ENCODE measurements at regions of chr5 and their contacts with region 1.

Region 1: GRCh38 chr5:148107608-148108007 is 43.8 kb downstream of the SPINK5 start:
- DNase-seq: peak in 1 of 2 experiments; percentile 5
- H3K4me3 ChIP-seq: no peak overlapping the region
- H3K4me3 Mint-ChIP-seq: no peak overlapping the region
- H3K27ac Mint-ChIP-seq: no peak overlapping the region
- H3K4me1 ChIP-seq: no peaks in the 10 kb centered on the region
- H3K4me1 Mint-ChIP-seq: no peaks in the 10 kb centered on the region
- H3K27me3 ChIP-seq: no peaks in the 10 kb centered on the region
- H3K27me3 Mint-ChIP-seq: no peaks in the 10 kb centered on the region
- CTCF ChIP-seq: peak; percentile 21 to 24

Region 2: DNA sequence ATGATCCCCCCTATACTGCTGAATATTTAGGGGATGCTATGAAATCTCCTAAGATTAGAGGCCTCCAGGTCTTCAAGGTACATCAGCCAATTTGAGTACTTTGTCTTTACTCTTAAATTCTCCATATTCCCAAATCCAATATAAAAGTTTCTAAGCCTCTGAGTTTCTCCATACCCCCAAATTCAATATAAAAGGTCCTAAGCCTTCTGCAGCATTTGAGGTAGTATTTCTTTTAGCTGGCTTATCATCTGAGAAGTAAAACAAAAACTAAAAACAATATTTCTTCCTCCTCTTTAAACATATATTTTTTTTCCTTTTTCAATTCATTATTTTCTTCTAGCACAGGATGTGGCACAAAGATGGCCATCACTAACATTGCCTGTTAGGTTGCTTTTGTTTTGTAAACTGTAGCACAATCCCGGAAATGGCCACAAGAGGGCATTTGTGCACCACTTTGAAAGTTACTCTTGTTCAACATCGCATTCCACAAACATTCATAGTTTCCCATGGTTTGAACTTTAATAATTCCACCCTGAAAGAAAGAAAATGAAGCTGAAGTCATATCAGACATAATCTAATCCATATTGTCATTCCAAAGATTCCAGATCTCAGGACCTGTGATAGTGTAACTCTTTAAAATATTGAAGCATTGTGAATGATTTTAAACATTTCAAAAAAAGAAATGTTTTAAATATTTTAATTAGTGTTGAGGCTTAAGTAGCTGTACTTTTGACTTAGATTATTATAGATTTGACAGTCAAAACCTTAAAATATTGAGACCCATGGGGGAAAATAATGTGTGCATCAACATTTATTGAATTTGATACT is 250.1 kb before region 1 on chr5:
- CTCF ChIA-PET with region 1: no interaction called
- POLR2A ChIA-PET with region 1: no interaction called
- intact Hi-C with region 1: loop called (anchors 10 kb)
- DNase-seq: peak; percentile 66 to 71
- H3K4me3 ChIP-seq: no peak overlapping the region
- H3K4me3 Mint-ChIP-seq: no peak overlapping the region
- H3K27ac Mint-ChIP-seq: no peak overlapping the region
- H3K4me1 ChIP-seq: no peaks in the 10 kb centered on the region; the same call in 1 of the 2 replicates
- H3K4me1 Mint-ChIP-seq: peaks cover 6% of the 10 kb centered on the region
- H3K27me3 ChIP-seq: no peaks in the 10 kb centered on the region
- H3K27me3 Mint-ChIP-seq: no peaks in the 10 kb centered on the region
- CTCF ChIP-seq: peak; percentile 77 to 81

Region 3: GRCh38 chr5:148020247-148020988 is 87.2 kb before region 1 on chr5:
- CTCF ChIA-PET with region 1: no interaction called
- POLR2A ChIA-PET with region 1: no interaction called
- intact Hi-C with region 1: no loop called
- DNase-seq: no peak
- H3K4me3 ChIP-seq: no peak overlapping the region
- H3K4me3 Mint-ChIP-seq: no peak overlapping the region
- H3K27ac Mint-ChIP-seq: no peak overlapping the region
- H3K4me1 ChIP-seq: no peaks in the 10 kb centered on the region
- H3K4me1 Mint-ChIP-seq: no peaks in the 10 kb centered on the region
- H3K27me3 ChIP-seq: no peaks in the 10 kb centered on the region
- H3K27me3 Mint-ChIP-seq: no peaks in the 10 kb centered on the region
- CTCF ChIP-seq: no peak

Measured in Caco-2 (cell line).